Activated naive CD4-positive, alpha-beta T cell treated with anti-CD3 and anti-CD28 coated beads for 36 hours (primary cell): ENCODE measurements at regions of chr17 and their contacts with region 1.

Region 1: DNA sequence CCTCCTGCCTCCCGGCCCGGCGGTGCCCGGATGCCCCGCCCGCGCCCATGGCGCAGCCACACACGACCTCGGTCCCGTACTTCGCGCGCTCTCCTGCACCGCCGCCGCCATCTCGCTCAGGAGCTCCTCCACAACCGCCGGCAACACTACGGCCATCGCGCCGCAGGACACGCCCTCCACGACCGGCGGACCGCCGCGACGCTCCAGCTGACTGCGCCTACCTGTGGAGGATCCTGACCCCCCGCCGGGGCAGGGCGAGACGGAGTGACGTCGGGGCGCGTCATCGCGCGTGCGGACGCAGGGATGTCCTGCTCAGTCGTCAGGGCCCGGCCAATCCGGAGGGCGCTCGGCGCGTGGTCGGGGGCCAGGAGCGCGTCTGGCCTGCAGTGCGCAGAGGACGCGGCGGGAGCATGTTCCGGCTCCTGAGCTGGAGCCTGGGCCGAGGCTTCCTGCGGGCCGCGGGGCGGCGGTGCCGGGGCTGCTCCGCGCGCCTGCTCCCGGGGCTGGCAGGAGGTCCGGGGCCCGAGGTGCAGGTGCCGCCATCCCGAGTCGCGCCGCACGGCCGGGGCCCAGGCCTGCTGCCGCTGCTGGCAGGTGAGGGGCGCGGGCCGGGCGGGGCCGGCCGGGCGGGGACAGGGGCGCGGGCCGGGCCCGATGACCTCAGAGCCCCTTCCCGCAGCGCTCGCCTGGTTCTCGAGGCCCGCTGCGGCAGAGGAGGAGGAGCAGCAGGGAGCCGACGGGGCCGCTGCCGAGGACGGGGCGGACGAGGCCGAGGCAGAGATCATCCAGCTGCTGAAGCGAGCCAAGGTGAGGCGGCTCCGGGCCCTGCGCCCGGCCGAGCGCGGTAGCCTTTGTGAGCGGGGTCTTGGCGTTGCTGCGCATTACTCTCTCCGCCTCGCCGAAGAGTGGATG is at the starts of genes TTC19 and ZSWIM7:
- DNase-seq: peak; percentile 93
- H3K4me3 Mint-ChIP-seq: peak within 1 kb of the TSS; percentile 98
- H3K27ac Mint-ChIP-seq: peak within 1 kb of the TSS; percentile 92
- H3K4me1 Mint-ChIP-seq: peaks cover 23% of the 10 kb centered on the region
- H3K27me3 Mint-ChIP-seq: no peaks in the 10 kb centered on the region
- total RNA-seq, gene TTC19: 18.8 to 20.8 TPM
- total RNA-seq, gene ZSWIM7: 8.3 to 10.8 TPM

Region 2: DNA sequence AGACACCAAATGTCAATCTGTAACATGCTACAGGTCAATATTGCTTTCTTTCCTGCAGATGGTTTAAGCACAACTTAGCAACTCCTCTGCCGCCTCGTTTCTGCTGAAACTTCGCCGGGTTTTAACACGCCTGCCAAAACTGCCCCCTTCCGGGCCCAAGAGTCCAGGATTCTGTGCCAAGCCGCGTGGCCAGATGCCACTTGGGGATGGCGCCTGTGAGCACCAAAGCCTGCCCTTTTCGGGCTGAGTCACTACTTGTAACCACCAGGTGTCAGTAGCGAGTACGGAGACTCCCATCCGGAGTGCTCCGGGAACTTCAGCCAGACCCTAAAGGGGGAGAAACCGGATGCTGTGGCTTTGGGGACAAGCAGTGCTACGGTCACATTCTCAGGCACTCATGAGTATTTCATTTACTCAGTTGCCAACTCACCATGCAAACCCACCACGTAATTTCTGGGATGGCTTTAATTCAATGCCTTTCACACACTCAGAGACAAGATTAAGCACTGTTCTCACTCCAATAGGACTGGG is 742.4 kb before region 1 on chr17:
- CTCF ChIA-PET with region 1: no interaction called
- intact Hi-C with region 1: loop called (anchors 2 kb)
- DNase-seq: peak; percentile 79
- H3K4me3 Mint-ChIP-seq: no peak overlapping the region
- H3K27ac Mint-ChIP-seq: no peak overlapping the region
- H3K4me1 Mint-ChIP-seq: peaks cover 14% of the 10 kb centered on the region
- H3K27me3 Mint-ChIP-seq: peaks cover 56% of the 10 kb centered on the region

Region 3: GRCh38 chr17:15981208-15981607 is 18.5 kb before region 1 on chr17:
- CTCF ChIA-PET with region 1: interaction called, 9 read pairs
- intact Hi-C with region 1: loop called (anchors 1 kb)
- DNase-seq: peak; percentile 65
- H3K4me3 Mint-ChIP-seq: no peak overlapping the region
- H3K27ac Mint-ChIP-seq: no peak overlapping the region
- H3K4me1 Mint-ChIP-seq: peaks cover 21% of the 10 kb centered on the region
- H3K27me3 Mint-ChIP-seq: no peaks in the 10 kb centered on the region

Region 4: GRCh38 chr17:16073845-16074244 is 74.2 kb after region 1 on chr17:
- CTCF ChIA-PET with region 1: no interaction called
- intact Hi-C with region 1: no loop called
- DNase-seq: no peak
- H3K4me3 Mint-ChIP-seq: no peak overlapping the region
- H3K27ac Mint-ChIP-seq: no peak overlapping the region
- H3K4me1 Mint-ChIP-seq: peaks cover 3% of the 10 kb centered on the region
- H3K27me3 Mint-ChIP-seq: no peaks in the 10 kb centered on the region

Region 5: DNA sequence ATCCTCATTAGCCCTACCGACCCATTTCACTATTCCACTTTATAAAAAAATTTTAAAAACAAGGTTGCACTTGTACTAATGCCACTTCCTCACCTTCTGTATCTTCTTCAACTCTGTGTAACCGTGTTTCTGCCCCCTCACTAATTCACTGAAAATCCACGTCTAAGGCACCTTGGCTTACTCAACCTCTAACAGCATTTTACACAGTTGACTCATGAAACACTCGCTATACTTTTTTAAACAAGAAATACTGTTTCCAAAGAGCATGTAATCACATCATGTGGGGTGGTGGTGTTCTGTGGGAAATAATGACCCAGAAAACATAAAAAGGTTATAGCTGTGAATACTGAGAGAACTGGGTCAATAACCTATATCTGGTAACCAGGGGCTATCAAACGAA is 135.8 kb after region 1 on chr17:
- CTCF ChIA-PET with region 1: no interaction called
- intact Hi-C with region 1: no loop called
- DNase-seq: no peak
- H3K4me3 Mint-ChIP-seq: no peak overlapping the region
- H3K27ac Mint-ChIP-seq: no peak overlapping the region
- H3K4me1 Mint-ChIP-seq: no peaks in the 10 kb centered on the region
- H3K27me3 Mint-ChIP-seq: no peaks in the 10 kb centered on the region

Region 6: DNA sequence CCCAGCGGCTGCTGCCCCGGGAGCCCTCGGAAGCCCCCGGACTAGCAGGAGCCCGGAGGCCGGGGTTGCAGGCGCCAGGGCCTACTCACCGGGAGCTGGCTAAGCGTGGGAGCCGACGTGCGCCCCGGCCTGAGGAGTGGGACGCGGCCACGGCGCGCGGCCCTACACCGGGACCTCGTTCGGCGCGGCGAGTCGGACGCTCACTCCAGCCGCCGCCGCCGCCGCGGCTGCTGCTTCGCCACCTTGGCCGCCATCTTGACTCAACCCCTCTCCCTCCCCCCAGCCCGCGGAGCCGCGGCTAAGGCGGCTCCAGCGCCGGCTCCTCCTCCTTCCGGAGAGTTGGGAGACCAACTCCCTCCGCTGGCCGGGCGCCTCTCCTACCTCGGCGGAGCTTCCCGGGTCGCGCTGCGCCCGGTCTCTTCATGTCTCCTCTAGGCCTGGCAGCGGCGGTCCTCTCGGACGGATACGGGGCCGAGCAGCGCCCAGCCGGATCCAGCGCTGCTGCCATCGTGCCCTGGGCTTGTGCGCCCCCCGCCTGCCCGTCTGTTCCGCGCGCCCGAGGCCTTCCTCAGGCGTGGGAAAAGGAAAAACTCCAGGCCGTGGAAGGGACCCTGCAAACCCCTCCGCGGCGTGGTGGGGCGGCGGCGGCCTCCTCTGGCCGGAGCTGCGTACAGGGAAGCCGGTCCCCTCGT is 215.7 kb after region 1 on chr17 and contains the start of gene NCOR1:
- CTCF ChIA-PET with region 1: no interaction called
- intact Hi-C with region 1: loop called (anchors 1 kb)
- DNase-seq: peak; percentile 93
- H3K4me3 Mint-ChIP-seq: peak within 1 kb of the TSS; percentile 99
- H3K27ac Mint-ChIP-seq: peak within 1 kb of the TSS; percentile 95
- H3K4me1 Mint-ChIP-seq: peaks cover 44% of the 10 kb centered on the region
- H3K27me3 Mint-ChIP-seq: no peaks in the 10 kb centered on the region
- total RNA-seq, gene NCOR1: 101 to 104 TPM

Region 7: GRCh38 chr17:16415031-16415924 is 415.6 kb after region 1 on chr17 and contains the start of gene TRPV2:
- CTCF ChIA-PET with region 1: no interaction called
- intact Hi-C with region 1: loop called (anchors 1 kb)
- DNase-seq: peak; percentile 67
- H3K4me3 Mint-ChIP-seq: peak within 1 kb of the TSS; percentile 98
- H3K27ac Mint-ChIP-seq: peak within 1 kb of the TSS; percentile 100
- H3K4me1 Mint-ChIP-seq: peaks cover 43% of the 10 kb centered on the region
- H3K27me3 Mint-ChIP-seq: no peaks in the 10 kb centered on the region
- total RNA-seq, gene TRPV2: 23.7 to 24.8 TPM